Mammary epithelial cell (primary cell): ENCODE measurements at regions of chr18 and their contacts with region 1.

Region 1: GRCh38 chr18:8478166-8478967 is 130.9 kb upstream of the RAB12 start:
- DNase-seq: peak; percentile 29
- H3K4me3 ChIP-seq: no peak overlapping the region
- H3K27ac ChIP-seq: no peak overlapping the region
- H3K4me1 ChIP-seq: no peaks in the 10 kb centered on the region
- H3K27me3 ChIP-seq: no peaks in the 10 kb centered on the region
- CTCF ChIP-seq: peak; percentile 94 to 95

Region 2: DNA sequence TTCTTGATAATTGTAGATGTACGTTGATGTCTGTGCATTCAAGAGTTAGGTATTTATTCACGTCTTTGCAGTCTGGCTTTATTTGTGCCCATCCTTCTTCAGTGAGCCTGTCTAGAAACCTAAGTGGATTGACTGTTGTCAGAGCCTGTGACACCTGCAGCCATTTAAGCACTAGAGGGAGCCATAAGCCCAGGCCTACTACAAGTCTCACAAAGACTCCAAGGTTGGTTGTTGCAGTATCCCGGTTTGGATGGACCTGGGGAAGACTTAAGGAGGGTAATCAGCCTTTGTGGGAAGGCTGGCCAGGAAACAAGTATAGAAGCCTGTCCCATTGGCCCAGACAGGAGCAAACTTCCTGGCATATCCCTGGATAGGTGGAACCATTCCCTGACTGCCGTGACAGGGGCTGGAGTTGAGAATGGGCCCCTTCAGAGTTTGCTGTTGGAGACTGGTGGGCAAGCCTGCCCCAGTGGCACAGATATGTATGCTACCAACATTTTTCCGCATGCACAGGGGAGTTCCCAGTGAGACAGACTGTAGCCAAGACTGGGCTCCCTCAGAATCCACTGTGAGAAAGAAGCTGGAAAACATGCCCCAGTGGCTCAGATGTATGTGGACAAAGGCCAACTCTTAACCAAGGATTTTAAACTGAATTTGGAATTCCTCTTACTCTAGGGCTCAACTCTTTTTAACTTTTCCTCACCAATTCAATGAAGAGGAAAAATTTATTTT is 1256.8 kb before region 1 on chr18:
- CTCF ChIA-PET with region 1: no interaction called
- dilution Hi-C with region 1: no loop called
- in situ Hi-C with region 1: no loop called
- intact Hi-C with region 1: loop called (anchors 1 kb)
- DNase-seq: peak; percentile 58
- H3K4me3 ChIP-seq: no peak overlapping the region
- H3K27ac ChIP-seq: no peak overlapping the region
- H3K4me1 ChIP-seq: no peaks in the 10 kb centered on the region
- H3K27me3 ChIP-seq: no peaks in the 10 kb centered on the region
- CTCF ChIP-seq: peak; percentile 94 to 96

Region 3: GRCh38 chr18:8673256-8674209 is 195.2 kb after region 1 on chr18:
- CTCF ChIA-PET with region 1: no interaction called
- dilution Hi-C with region 1: no loop called
- in situ Hi-C with region 1: no loop called
- intact Hi-C with region 1: no loop called
- DNase-seq: peak; percentile 23
- H3K4me3 ChIP-seq: no peak overlapping the region
- H3K27ac ChIP-seq: no peak overlapping the region
- H3K4me1 ChIP-seq: peaks cover 2% of the 10 kb centered on the region
- H3K27me3 ChIP-seq: no peaks in the 10 kb centered on the region
- CTCF ChIP-seq: no peak